ENCODE measurements at regions of chr9 and their contacts with region 1.

Region 1: GRCh38 chr9:107576962-107577776 is 87.6 kb upstream of the KLF4 start:
- DNase-seq: no peak
- H3K4me3 ChIP-seq: no peak overlapping the region
- H3K27ac ChIP-seq: peak overlapping the region in 3 of 59 donors; percentile 27 to 43 (median 40)
- H3K27me3 ChIP-seq: no peaks in the 10 kb centered on the region
- CTCF ChIP-seq: no peak

Region 2: DNA sequence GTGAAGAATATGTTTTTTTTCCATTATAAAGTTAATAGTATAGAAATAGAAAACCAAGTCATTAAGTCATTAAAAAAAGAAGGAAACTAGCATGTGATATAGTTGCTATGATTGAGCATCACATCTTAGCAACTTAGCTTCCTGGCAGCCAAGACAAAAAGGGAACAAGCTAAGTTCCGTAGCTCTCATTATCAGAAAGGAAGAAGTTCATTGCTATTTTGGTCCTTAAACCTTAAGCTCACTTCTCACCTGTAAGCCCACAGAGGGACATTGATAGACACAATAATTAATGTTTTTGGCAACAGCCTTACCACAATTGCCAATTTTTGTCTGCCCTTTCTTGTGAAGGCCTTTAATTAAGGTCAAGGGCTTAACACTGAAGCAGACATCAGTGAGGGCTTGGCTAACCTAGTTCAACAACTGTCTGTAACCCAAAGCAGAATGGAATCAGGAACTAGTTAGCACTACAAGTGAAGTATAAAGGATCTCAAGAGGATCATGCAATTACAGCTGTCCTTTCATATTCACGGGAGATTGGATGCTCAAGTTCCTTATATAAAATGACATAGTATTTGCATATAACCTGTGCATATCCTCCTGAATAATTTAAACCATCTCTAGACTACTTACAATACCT is 63.6 kb before region 1 on chr9:
- intact Hi-C with region 1: loop called in 1 of 2 experiments (anchors 10 kb)
- DNase-seq: no peak
- H3K4me3 ChIP-seq: no peak overlapping the region
- H3K27ac ChIP-seq: no peak overlapping the region
- H3K27me3 ChIP-seq: no peaks in the 10 kb centered on the region
- CTCF ChIP-seq: no peak

Measured in dorsolateral prefrontal cortex (tissue), 120 donors.